ENCODE measurements at regions of chr16 and their contacts with region 1.

Region 1: GRCh38 chr16:67159593-67160406 is at the starts of genes FBXL8 and TRADD:
- DNase-seq: peak; percentile 86
- H3K4me3 Mint-ChIP-seq: peak within 1 kb of the TSS; percentile 93
- H3K27ac Mint-ChIP-seq: peak within 1 kb of the TSS; percentile 95
- H3K4me1 Mint-ChIP-seq: peaks cover 57% of the 10 kb centered on the region
- H3K27me3 Mint-ChIP-seq: peaks cover 13% of the 10 kb centered on the region
- total RNA-seq, gene FBXL8: 24.1 to 25.7 TPM
- total RNA-seq, gene TRADD: 41.7 to 43.2 TPM

Region 2: DNA sequence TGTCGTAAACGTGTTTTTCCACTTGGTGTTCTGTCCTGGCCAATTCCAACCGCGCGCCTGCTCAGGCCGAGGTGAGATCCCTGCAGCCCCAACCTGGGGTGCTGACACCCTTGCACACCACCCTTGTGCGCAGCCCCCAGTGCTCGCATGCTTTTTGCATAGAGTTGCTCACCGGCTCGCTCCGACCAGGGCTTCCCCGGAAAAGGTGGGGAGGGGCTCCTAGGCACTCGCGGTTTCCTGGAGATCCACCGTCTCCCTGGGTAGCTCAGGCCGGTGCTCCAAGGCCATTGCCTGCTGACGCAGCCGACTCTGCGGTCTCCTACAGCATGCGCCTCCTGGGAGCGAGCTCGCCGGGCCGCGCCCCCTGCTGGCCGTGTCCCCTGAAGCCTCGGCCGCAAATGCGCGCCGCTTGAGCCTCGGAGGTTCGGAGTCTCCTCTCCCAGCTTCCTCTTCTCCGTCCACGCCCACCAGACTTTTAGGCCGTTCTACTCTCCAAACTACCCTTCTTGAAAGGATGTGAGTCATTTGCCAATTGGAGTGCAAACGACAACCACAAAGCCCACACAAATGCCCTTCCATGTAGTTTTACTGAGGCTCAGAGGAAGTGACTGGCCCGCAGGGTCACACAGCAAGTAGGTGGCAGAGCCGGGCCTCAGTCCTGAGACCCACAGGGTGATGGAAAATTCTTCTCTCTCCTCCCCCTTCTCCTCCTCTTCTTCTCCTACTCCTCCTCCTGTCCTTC is 286.7 kb before region 1 on chr16:
- CTCF ChIA-PET with region 1: interaction called, 3 read pairs
- POLR2A ChIA-PET with region 1: no interaction called
- intact Hi-C with region 1: loop called (anchors 2 kb)
- DNase-seq: peak; percentile 96
- H3K4me3 Mint-ChIP-seq: peak overlapping the region; percentile 74
- H3K27ac Mint-ChIP-seq: peak overlapping the region; percentile 69
- H3K4me1 Mint-ChIP-seq: peaks cover 46% of the 10 kb centered on the region
- H3K27me3 Mint-ChIP-seq: no peaks in the 10 kb centered on the region

Region 3: DNA sequence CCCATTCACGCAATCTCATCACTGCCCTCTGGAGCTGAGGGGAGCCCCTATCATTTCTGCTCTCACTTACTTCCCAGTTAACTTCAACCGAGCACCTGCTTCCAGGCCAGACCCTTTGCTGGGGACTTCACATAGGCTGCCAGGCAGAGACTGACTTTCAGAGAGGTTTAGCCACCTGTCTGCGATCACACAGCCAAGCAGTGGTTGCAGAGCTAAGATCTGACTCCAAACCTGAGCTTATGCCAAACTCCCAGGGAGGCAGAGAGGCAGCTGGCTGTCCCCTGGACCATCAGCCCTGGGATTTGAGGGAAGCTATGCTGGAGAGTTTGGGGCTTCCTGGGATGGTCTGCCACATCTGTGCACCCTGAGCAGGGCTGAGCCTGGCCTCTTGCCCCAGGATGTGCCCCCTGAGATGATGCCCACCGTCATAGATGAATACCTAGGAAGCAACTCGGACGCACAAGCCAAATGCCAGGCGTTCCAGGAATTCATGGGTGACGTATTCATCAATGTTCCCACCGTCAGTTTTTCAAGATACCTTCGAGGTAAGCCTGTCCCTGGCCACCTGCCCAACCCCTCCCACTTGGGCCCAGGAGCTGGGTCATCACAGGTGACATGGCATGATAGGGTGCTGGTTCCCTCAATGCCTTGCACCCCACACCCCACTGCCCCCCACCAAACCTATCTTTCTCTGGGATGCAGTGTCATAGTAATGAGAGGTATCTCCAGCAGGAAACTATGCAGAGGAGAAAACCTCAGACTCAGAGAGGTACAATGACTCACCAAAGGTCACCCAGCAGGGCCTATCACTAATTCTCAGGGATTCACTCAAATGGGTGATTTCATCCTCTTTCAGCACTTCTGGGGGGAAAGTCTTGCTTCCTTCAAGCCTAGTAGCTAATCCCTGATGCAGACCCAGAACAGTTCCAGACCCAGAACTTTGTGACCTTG is 188.8 kb before region 1 on chr16:
- CTCF ChIA-PET with region 1: interaction called, 25 read pairs
- POLR2A ChIA-PET with region 1: no interaction called
- intact Hi-C with region 1: no loop called
- DNase-seq: no peak
- H3K4me3 Mint-ChIP-seq: no peak overlapping the region
- H3K27ac Mint-ChIP-seq: no peak overlapping the region
- H3K4me1 Mint-ChIP-seq: peaks cover 16% of the 10 kb centered on the region
- H3K27me3 Mint-ChIP-seq: no peaks in the 10 kb centered on the region

Region 4: GRCh38 chr16:67017810-67018488 is 141.9 kb before region 1 on chr16:
- CTCF ChIA-PET with region 1: interaction called, 350 read pairs
- POLR2A ChIA-PET with region 1: interaction called, 8 read pairs
- intact Hi-C with region 1: loop called (anchors 1 kb)
- DNase-seq: peak; percentile 95
- H3K4me3 Mint-ChIP-seq: no peak overlapping the region
- H3K27ac Mint-ChIP-seq: no peak overlapping the region
- H3K4me1 Mint-ChIP-seq: peaks cover 19% of the 10 kb centered on the region
- H3K27me3 Mint-ChIP-seq: no peaks in the 10 kb centered on the region

Region 5: GRCh38 chr16:67104061-67104460 is 55.7 kb before region 1 on chr16:
- CTCF ChIA-PET with region 1: interaction called, 13 read pairs
- POLR2A ChIA-PET with region 1: no interaction called
- intact Hi-C with region 1: loop called (anchors 5 kb)
- DNase-seq: no peak
- H3K4me3 Mint-ChIP-seq: peak overlapping the region; percentile 0
- H3K27ac Mint-ChIP-seq: no peak overlapping the region
- H3K4me1 Mint-ChIP-seq: peaks cover 7% of the 10 kb centered on the region
- H3K27me3 Mint-ChIP-seq: no peaks in the 10 kb centered on the region

Region 6: GRCh38 chr16:67183627-67184328 is 24.0 kb after region 1 on chr16 and contains the start of gene MATCAP1:
- CTCF ChIA-PET with region 1: interaction called, 24 read pairs
- POLR2A ChIA-PET with region 1: interaction called, 3 read pairs
- intact Hi-C with region 1: loop called (anchors 1 kb)
- DNase-seq: peak; percentile 96
- H3K4me3 Mint-ChIP-seq: no peak within 1 kb of the TSS
- H3K27ac Mint-ChIP-seq: no peak within 1 kb of the TSS
- H3K4me1 Mint-ChIP-seq: peaks cover 14% of the 10 kb centered on the region
- H3K27me3 Mint-ChIP-seq: peaks cover 8% of the 10 kb centered on the region
- total RNA-seq, gene MATCAP1: 37.3 to 38.3 TPM

Region 7: GRCh38 chr16:67236563-67237395 is 77.0 kb after region 1 on chr16:
- CTCF ChIA-PET with region 1: no interaction called
- POLR2A ChIA-PET with region 1: no interaction called
- intact Hi-C with region 1: no loop called
- DNase-seq: peak; percentile 91
- H3K4me3 Mint-ChIP-seq: peak overlapping the region; percentile 76
- H3K27ac Mint-ChIP-seq: peak overlapping the region; percentile 98
- H3K4me1 Mint-ChIP-seq: peaks cover 21% of the 10 kb centered on the region
- H3K27me3 Mint-ChIP-seq: no peaks in the 10 kb centered on the region

Measured in activated CD4-positive, alpha-beta memory T cell treated with anti-CD3 and anti-CD28 coated beads for 36 hours (primary cell).